Mammary epithelial cell (primary cell): ENCODE measurements at regions of chr21 and their contacts with region 1.

Region 1: DNA sequence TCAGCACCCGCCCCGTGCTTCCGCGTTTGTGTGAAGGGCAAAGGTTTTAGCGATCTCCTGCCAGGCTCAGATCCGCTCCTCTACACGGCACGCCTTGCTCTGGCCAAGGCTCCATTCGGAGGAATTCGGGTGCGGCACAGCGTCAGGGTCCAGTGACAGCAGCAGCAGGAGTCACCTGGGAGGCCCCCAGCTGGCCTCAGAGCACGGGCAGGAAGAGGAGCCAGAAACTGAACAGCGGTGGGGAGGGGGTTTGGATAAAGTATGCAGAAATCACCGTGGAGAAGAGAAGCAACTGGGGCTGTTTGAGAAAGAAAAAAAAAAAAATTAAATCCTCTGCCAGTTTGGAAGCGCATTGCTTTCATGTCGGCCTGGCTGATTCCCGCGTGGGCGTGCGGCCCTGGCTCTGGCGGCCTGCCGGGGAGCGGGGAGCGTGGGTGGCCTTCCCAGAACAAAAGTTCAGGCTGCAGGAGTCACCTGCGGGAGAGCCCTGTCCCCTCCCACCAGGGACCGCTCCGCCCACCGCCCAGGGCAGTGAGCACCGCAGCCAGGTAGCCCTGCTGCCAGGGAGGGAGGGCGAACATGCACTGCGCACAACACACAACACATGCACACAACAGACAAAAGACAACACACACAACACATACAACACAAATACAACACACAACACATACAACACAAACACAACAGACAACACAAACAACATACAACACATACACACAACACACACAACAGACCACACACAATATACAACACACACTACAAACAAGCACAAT is 107.6 kb downstream of the ETS2 start:
- DNase-seq: peak; percentile 87
- H3K4me3 ChIP-seq: no peak overlapping the region
- H3K27ac ChIP-seq: peak overlapping the region; percentile 71
- H3K4me1 ChIP-seq: peaks cover 49% of the 10 kb centered on the region
- H3K27me3 ChIP-seq: no peaks in the 10 kb centered on the region
- CTCF ChIP-seq: no peak

Region 2: GRCh38 chr21:38831526-38832467 is 81.5 kb before region 1 on chr21:
- CTCF ChIA-PET with region 1: no interaction called
- dilution Hi-C with region 1: no loop called
- in situ Hi-C with region 1: loop called in 1 of 2 experiments (anchors 10 kb)
- intact Hi-C with region 1: loop called (anchors 1 kb)
- DNase-seq: peak; percentile 98
- H3K4me3 ChIP-seq: no peak overlapping the region
- H3K27ac ChIP-seq: peak overlapping the region; percentile 63
- H3K4me1 ChIP-seq: peaks cover 13% of the 10 kb centered on the region
- H3K27me3 ChIP-seq: no peaks in the 10 kb centered on the region
- CTCF ChIP-seq: no peak

Region 3: DNA sequence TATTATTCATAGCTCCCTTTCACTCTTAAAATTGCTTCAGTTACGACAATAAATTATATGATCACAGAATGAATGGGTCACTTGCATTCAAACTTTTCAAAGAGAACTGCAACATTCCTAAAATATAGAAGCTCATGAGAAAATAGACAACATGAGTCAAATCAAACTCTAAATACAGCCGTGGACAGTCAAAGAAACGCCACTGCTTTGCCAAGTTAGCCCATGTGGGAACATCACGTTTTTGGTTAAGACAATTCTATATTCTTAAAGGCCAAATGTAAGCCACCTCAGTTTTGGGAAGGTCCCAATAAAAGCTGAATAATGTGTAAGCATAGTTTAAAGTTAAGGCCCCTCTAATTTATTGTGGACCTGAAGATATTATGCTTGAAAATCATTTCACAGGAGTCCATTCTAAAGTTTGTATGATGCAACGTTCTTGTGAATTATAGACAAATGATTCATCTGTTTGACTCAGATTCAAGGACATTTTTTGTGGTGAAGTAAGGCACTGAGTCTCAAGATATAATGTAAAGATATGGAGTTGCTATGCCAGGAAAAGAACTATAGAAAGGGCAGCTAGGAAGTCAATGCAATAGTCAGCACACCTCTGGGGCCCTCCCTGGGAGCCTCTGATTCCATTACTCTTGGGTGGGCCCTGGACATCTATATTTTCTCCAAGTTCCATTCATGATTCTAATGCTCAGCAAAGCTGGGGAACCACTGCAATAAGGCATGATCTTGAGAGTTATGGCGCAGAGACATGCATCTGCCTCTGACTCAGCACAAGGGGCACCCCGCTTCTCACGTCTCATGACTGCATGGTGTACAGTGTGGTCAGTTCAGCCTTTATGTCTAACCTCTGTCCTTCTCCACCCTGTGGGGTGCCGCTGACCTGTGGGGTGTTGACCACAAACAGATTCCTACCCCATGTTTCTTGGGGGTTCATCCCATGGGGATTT is 73.7 kb before region 1 on chr21:
- CTCF ChIA-PET with region 1: interaction called, 6 read pairs
- dilution Hi-C with region 1: no loop called
- in situ Hi-C with region 1: loop called in 1 of 2 experiments (anchors 5 kb)
- intact Hi-C with region 1: loop called (anchors 2 kb)
- DNase-seq: peak; percentile 97
- H3K4me3 ChIP-seq: no peak overlapping the region
- H3K27ac ChIP-seq: peak overlapping the region; percentile 96
- H3K4me1 ChIP-seq: peaks cover 33% of the 10 kb centered on the region
- H3K27me3 ChIP-seq: no peaks in the 10 kb centered on the region
- CTCF ChIP-seq: no peak

Region 4: DNA sequence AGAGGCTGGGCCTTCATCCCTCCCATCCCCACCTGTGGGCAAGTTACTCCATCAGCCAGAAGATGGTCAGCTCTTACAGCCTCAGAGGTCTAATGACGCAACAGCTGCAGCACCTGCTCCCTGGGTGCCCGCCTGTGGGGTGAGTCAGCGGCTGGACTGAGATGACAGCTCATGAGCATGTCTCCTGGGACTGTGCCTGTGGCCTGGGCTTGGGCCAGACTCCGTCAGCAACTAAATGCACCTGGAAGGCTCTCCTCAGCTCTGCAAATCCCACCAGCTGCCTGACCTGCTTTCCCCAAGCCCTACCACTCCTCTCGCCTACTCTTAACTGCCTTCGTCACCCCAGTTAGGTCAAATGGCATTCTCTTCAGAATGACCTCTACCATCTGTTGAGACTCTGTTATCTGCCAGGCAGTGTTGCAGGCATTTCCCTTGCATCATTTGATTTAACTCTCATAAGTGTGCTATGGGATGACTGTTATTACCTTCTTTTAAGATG is 59.8 kb before region 1 on chr21:
- CTCF ChIA-PET with region 1: no interaction called
- dilution Hi-C with region 1: no loop called
- in situ Hi-C with region 1: no loop called
- intact Hi-C with region 1: loop called (anchors 2 kb)
- DNase-seq: peak; percentile 98
- H3K4me3 ChIP-seq: no peak overlapping the region
- H3K27ac ChIP-seq: peak overlapping the region; percentile 45
- H3K4me1 ChIP-seq: peaks cover 28% of the 10 kb centered on the region
- H3K27me3 ChIP-seq: no peaks in the 10 kb centered on the region
- CTCF ChIP-seq: no peak

Region 5: DNA sequence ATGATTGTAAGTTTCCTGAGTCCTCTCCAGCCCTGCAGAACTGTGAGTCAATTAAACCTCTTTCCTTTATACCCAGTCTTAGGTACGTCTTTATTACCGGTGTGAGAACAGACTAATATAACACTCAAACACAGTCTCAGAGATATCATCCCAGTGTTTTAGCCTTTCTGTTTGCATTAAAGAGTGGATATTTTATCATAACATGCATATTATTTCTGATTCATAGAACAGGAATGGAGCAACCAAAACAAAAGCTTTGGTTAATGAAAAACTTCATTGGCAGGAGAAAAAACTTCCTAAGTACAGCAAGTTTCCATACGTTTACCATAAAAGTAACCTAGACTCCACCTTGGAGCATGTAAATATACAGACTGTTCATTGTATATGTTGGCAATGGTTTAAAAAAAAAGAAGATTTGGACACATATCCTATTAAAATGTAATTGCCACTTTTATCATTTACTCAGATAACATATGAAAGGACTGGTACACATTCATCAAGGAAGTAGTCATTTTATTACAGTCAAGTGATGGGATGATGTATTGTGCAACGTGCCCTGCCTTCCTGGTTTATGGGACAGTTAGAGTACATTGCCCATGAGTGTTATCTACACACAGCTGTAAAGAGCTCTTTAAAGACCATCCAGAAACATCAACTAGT is 37.3 kb after region 1 on chr21:
- CTCF ChIA-PET with region 1: no interaction called
- dilution Hi-C with region 1: no loop called
- in situ Hi-C with region 1: no loop called
- intact Hi-C with region 1: no loop called
- DNase-seq: peak; percentile 41
- H3K4me3 ChIP-seq: no peak overlapping the region
- H3K27ac ChIP-seq: no peak overlapping the region
- H3K4me1 ChIP-seq: peaks cover 9% of the 10 kb centered on the region
- H3K27me3 ChIP-seq: no peaks in the 10 kb centered on the region
- CTCF ChIP-seq: no peak

Region 6: GRCh38 chr21:39004634-39005501 is 91.6 kb after region 1 on chr21:
- CTCF ChIA-PET with region 1: no interaction called
- dilution Hi-C with region 1: no loop called
- in situ Hi-C with region 1: no loop called
- intact Hi-C with region 1: loop called (anchors 2 kb)
- DNase-seq: no peak
- H3K4me3 ChIP-seq: no peak overlapping the region
- H3K27ac ChIP-seq: no peak overlapping the region
- H3K4me1 ChIP-seq: peaks cover 10% of the 10 kb centered on the region
- H3K27me3 ChIP-seq: no peaks in the 10 kb centered on the region
- CTCF ChIP-seq: no peak

Region 7: GRCh38 chr21:39125752-39126485 is 212.6 kb after region 1 on chr21:
- CTCF ChIA-PET with region 1: no interaction called
- dilution Hi-C with region 1: no loop called
- in situ Hi-C with region 1: no loop called
- intact Hi-C with region 1: loop called (anchors 2 kb)
- DNase-seq: peak; percentile 62
- H3K4me3 ChIP-seq: no peak overlapping the region
- H3K27ac ChIP-seq: no peak overlapping the region
- H3K4me1 ChIP-seq: no peaks in the 10 kb centered on the region
- H3K27me3 ChIP-seq: no peaks in the 10 kb centered on the region
- CTCF ChIP-seq: peak; percentile 54 to 79